ENCODE measurements at regions of chrX and their contacts with region 1.

Region 1: GRCh38 chrX:153794018-153794896 is at the starts of genes IDH3G and SSR4:
- DNase-seq: peak; percentile 94 to 97 (median 97)
- ATAC-seq: peak; percentile 95 to 96
- H3K4me3 ChIP-seq: peak within 1 kb of the TSS; percentile 90
- H3K27ac ChIP-seq: peak within 1 kb of the TSS; percentile 95
- H3K4me1 ChIP-seq: peaks cover 4% of the 10 kb centered on the region
- H3K27me3 ChIP-seq: no peaks in the 10 kb centered on the region
- total RNA-seq, gene IDH3G: 60.6 to 68.6 (median 66.6) TPM
- total RNA-seq, gene SSR4: 162 to 208 (median 193) TPM

Region 2: DNA sequence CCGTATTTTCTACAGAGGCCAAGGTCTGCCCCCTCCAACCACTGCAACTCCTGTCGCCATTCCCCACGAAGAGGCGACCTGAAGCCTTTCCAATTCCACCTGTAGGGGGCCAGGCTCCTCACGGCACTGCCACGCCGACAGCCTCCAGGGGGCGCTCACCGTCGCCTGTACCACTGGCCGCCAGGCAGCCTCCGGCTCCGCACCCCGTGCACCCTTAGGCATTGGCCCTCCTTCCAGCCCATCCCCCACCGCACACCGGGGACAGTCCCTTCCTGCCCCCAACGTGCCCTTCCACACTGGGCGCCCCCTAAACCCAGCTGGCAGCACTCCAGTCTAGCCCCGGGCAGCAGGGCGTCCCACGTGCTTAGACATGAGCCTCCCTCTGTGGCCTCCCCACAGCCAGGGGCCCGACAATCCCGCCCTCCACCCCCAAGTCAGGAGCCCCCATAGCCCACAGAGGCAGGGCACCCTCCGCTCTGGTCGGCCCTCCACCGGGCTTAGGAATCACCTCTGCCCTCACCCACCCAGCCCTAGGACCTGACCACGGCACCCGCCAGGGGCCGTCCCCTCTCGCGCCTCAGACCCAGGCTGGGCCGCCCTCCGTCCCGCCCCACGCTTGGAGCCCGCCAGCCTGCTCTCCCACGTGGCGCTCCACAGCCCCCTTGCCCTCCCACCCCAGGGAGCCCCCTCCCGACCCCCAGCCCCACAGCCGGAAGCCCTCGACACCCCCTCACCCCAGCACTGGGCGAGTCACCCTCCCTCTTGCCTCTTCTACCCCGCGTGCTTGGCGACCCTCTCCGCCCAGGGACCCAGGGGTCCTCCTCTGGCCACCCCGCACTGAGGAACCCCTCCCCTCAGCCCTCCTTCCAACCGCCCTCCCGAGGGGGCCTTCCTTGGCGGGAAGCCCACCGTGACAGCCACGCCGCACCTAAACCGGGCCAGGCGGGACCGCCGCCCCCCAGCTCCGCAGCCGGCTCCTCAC is 393.8 kb before region 1 on chrX:
- intact Hi-C with region 1: no loop called
- DNase-seq: peak in 2 of 3 donors; percentile 58 to 74
- ATAC-seq: peak in 1 of 2 donors; percentile 62
- H3K4me3 ChIP-seq: no peak overlapping the region
- H3K27ac ChIP-seq: no peak overlapping the region
- H3K4me1 ChIP-seq: no peaks in the 10 kb centered on the region
- H3K27me3 ChIP-seq: no peaks in the 10 kb centered on the region

Region 3: GRCh38 chrX:153927922-153928760 is 133.9 kb after region 1 on chrX:
- intact Hi-C with region 1: loop called in 1 of 4 experiments (anchors 10 kb)
- DNase-seq: peak; percentile 97 to 98 (median 98)
- ATAC-seq: peak; percentile 91 to 94
- H3K4me3 ChIP-seq: peak overlapping the region; percentile 50
- H3K27ac ChIP-seq: peak overlapping the region; percentile 99
- H3K4me1 ChIP-seq: peaks cover 6% of the 10 kb centered on the region
- H3K27me3 ChIP-seq: no peaks in the 10 kb centered on the region